ENCODE measurements at regions of chr13 and their contacts with region 1.

Region 1: DNA sequence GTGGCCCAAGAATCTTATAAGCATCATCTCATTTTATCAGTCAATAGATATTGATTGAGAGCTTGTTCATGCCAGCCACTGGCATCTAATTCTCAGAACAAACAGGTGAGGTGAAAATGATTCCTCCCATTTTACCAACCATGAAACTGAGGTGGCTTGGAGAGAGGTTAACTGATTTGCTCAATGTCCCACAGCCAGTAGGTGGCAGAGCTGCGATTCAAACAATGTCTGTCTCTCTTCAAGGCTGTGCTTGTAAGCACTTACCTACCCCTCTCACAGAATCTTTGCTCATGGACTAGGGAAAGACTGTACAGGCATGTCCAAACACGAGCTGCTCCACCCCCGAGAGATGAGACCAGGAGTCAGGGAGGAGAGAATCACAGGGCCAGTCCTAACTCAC is 21.5 kb upstream of the GSX1 start:
- DNase-seq: peak; percentile 59
- ATAC-seq: no peak
- H3K4me3 Mint-ChIP-seq: no peak overlapping the region
- H3K27ac Mint-ChIP-seq: no peak overlapping the region
- H3K4me1 Mint-ChIP-seq: no peaks in the 10 kb centered on the region
- H3K27me3 Mint-ChIP-seq: peaks cover 16% of the 10 kb centered on the region
- CTCF ChIP-seq: peak; percentile 44

Region 2: GRCh38 chr13:27744801-27745200 is 26.0 kb before region 1 on chr13:
- CTCF ChIA-PET with region 1: no interaction called
- POLR2A ChIA-PET with region 1: no interaction called
- intact Hi-C with region 1: no loop called
- DNase-seq: no peak
- ATAC-seq: no peak
- H3K4me3 Mint-ChIP-seq: no peak overlapping the region
- H3K27ac Mint-ChIP-seq: no peak overlapping the region
- H3K4me1 Mint-ChIP-seq: no peaks in the 10 kb centered on the region
- H3K27me3 Mint-ChIP-seq: peaks cover 4% of the 10 kb centered on the region
- CTCF ChIP-seq: no peak

Region 3: DNA sequence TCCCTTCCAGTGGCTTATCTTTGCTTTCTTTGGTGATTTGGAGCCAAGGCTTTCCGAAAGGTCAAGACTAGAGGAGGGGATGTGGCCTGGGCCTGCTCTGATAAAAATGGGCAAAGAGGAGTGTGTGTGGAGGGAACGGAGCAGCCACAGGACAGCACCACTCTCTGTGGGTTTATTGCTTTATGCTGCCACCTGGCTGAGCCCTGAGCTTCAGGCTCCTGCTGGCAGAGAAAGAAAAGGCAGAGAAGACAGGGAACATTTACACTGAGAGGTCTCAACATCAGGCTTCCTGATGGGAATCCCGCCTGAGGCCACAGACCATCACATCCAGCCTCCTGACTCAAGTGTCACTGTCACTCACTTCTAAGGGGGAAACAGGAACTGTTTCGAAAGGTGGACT is 12.3 kb after region 1 on chr13:
- CTCF ChIA-PET with region 1: interaction called, 10 read pairs
- POLR2A ChIA-PET with region 1: no interaction called
- intact Hi-C with region 1: no loop called
- DNase-seq: no peak
- ATAC-seq: no peak
- H3K4me3 Mint-ChIP-seq: no peak overlapping the region
- H3K27ac Mint-ChIP-seq: no peak overlapping the region
- H3K4me1 Mint-ChIP-seq: no peaks in the 10 kb centered on the region
- H3K27me3 Mint-ChIP-seq: peaks cover 24% of the 10 kb centered on the region
- CTCF ChIP-seq: no peak

Region 4: GRCh38 chr13:27878274-27878673 is 107.5 kb after region 1 on chr13:
- CTCF ChIA-PET with region 1: no interaction called
- POLR2A ChIA-PET with region 1: no interaction called
- intact Hi-C with region 1: no loop called
- DNase-seq: no peak
- ATAC-seq: no peak
- H3K4me3 Mint-ChIP-seq: no peak overlapping the region
- H3K27ac Mint-ChIP-seq: no peak overlapping the region
- H3K4me1 Mint-ChIP-seq: no peaks in the 10 kb centered on the region
- H3K27me3 Mint-ChIP-seq: peaks cover 43% of the 10 kb centered on the region
- CTCF ChIP-seq: no peak

Measured in activated CD8-positive, alpha-beta T cell treated with anti-CD3 and anti-CD28 coated beads for 36 hours (primary cell).